HepG2 (cell line): ENCODE measurements at regions of chr1 and their contacts with region 1.

Region 1: GRCh38 chr1:204213668-204214662 is at the start of gene GOLT1A:
- DNase-seq: peak; percentile 90
- ATAC-seq: peak; percentile 90
- H3K4me3 ChIP-seq: peak within 1 kb of the TSS; percentile 57 to 84 (median 67)
- H3K27ac ChIP-seq: peak within 1 kb of the TSS; percentile 66
- H3K4me1 ChIP-seq: peaks cover 41% of the 10 kb centered on the region
- H3K27me3 ChIP-seq: no peaks in the 10 kb centered on the region; a peak in 1 of 5 replicates
- CTCF ChIP-seq: peak; percentile 93
- EP300 ChIP-seq: peak; percentile 10 to 48; a peak in 1 of 4 replicates
- POLR2A ChIP-seq: peak; percentile 35 to 83; a peak in 3 of 4 replicates
- RAD21 ChIP-seq: peak; percentile 81
- total RNA-seq, gene GOLT1A: 19.4 and 28.0 TPM in 2 replicates

Region 2: DNA sequence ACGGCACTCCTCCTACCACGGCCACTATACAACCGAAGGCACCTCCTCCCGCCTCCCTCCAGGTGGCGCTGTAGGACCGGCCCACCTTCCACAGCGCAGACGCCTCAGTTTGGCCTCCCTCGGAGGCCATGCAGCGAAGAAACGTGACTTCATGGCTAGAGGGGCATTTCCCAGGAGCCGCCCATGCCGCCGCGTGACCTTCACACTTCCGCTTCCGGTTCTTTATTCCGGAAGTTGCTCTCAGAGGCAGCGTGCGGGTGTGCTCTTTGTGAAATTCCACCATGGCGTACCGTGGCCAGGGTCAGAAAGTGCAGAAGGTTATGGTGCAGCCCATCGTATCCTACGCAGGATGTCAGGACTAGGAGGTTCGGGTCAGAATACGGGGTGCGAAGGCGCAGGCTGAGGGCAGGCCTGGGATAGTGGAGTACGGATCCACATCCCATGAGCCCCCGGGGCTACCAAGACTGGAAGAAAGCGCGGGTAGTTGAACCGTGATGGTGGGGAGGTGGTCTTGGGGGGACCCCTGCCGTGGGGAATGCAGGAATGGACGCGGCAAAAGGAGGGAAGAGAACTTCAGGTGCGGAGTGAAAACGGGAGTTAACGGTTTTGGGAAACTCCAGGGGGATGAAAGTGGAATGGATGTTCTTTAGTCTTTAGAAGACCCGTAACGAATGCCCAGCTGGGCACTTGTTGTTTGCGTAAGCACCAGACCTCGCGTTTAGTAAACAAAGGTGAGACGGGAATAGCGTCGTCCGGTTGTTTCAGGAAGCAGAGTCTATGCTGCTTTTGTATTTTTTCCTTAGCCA is 352.4 kb before region 1 on chr1 and contains the start of gene SNRPE:
- CTCF ChIA-PET with region 1: no interaction called
- POLR2A ChIA-PET with region 1: no interaction called
- in situ Hi-C with region 1: loop called (anchors 10 kb)
- intact Hi-C with region 1: loop called (anchors 5 kb)
- DNase-seq: peak; percentile 96
- ATAC-seq: peak; percentile 96
- H3K4me3 ChIP-seq: peak within 1 kb of the TSS; percentile 87 to 90 (median 90)
- H3K27ac ChIP-seq: peak within 1 kb of the TSS; percentile 85
- H3K4me1 ChIP-seq: peaks cover 27% of the 10 kb centered on the region
- H3K27me3 ChIP-seq: no peaks in the 10 kb centered on the region; a peak in 1 of 5 replicates
- CTCF ChIP-seq: peak; percentile 97
- EP300 ChIP-seq: peak in 1 of 2 experiments; percentile 48; a peak in 1 of 4 replicates
- POLR2A ChIP-seq: peak; percentile 71 to 92
- RAD21 ChIP-seq: peak; percentile 96
- total RNA-seq, gene SNRPE: 281 and 397 TPM in 2 replicates

Region 3: DNA sequence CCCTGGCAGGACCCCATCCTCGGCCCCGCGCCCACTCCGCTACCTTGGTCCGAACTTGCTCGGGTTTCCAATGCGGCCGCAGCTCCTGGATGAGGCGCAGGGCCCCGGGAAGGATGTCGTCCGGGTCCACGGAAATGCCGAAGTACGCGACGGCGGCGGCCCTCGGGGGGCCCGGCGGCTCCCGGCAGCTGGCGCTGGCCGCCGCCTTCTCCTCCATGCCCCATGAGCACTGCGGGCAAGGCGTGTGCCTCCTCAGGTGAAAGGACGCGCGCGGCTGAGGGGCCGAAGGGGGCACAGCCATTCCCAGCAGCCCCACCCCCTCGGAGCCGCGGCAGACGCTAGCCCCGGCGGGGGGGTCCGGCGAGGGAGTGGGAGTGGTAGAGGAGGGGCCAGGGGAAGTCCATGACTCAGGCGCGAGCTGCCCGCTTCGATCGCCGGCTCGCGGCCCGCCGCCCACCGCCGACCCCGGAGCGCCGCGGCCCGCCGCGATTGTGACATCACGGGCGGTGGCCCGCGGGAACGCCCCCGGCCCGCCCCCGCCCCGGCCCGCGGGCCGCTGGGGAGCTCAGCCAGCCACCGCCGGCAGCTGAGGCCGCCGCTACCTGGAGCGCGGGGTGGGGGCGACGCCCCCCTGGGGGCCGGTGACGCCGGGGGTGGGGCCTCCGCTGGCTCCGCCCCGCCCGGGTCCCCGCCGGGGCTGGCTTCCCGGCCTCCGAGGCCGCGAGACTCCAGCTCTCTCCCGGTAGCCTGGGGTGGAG is 62.2 kb before region 1 on chr1 and contains the start of gene ETNK2:
- CTCF ChIA-PET with region 1: no interaction called
- POLR2A ChIA-PET with region 1: interaction called, 5 read pairs
- in situ Hi-C with region 1: loop called (anchors 5 kb)
- intact Hi-C with region 1: no loop called
- DNase-seq: no peak
- ATAC-seq: peak; percentile 48
- H3K4me3 ChIP-seq: peak within 1 kb of the TSS; percentile 61 to 82 (median 72)
- H3K27ac ChIP-seq: peak within 1 kb of the TSS; percentile 38
- H3K4me1 ChIP-seq: peaks cover 46% of the 10 kb centered on the region
- H3K27me3 ChIP-seq: peaks cover 0 to 2% of the 10 kb centered on the region in 2 experiments; a peak in 3 of 5 replicates
- CTCF ChIP-seq: no peak; the same call in 1 of the 2 replicates
- EP300 ChIP-seq: no peak
- POLR2A ChIP-seq: peak in 1 of 2 experiments; percentile 65; a peak in 2 of 4 replicates
- RAD21 ChIP-seq: no peak
- total RNA-seq, gene ETNK2: 35.3 and 42.8 TPM in 2 replicates

Region 4: GRCh38 chr1:204169858-204170257 is 44.1 kb before region 1 on chr1:
- CTCF ChIA-PET with region 1: no interaction called
- POLR2A ChIA-PET with region 1: no interaction called
- in situ Hi-C with region 1: no loop called
- intact Hi-C with region 1: no loop called
- DNase-seq: no peak
- ATAC-seq: no peak
- H3K4me3 ChIP-seq: no peak overlapping the region
- H3K27ac ChIP-seq: no peak overlapping the region
- H3K4me1 ChIP-seq: peaks cover 24% of the 10 kb centered on the region
- H3K27me3 ChIP-seq: peaks cover 0 to 8% of the 10 kb centered on the region in 2 experiments; a peak in 1 of 5 replicates
- CTCF ChIP-seq: no peak
- EP300 ChIP-seq: no peak
- POLR2A ChIP-seq: no peak
- RAD21 ChIP-seq: no peak

Region 5: DNA sequence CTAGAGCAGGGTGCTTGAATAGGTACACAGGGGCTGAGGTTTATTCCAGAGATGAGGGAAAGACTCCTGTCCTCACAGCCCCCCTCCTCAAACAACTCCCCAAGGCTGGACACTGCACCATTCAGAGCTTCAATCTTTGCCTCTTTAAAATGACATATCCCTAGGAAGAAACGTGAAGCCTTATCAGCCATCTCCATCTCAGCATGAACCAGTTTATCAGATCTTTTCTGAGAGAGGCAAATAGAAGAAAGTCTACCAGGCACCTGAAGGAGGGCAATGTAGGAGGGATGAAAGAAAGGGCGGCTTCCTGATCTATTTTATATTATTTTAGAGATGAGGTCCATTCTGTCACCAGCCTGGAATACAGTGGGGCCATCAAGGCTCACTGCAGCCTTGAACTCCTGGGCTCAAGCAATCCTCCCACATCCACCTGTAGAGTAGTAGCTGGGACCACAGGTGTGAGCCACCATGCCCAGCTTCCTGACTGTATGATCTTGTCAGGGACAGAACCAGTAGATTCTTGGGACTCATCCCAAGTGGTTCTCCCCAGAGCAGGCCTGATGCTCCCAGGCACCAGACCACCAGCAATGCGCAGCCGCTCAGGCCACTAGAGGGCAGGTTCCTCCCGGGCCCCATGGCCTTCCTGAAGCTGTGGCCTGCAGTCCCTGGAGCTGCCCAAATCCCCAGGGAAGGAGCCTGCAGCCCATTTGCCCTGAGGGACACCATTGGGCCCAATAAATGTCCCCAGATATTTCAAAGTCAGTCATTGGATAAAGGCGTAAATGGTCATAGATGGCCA is 44.2 kb after region 1 on chr1:
- CTCF ChIA-PET with region 1: interaction called, 3 read pairs
- POLR2A ChIA-PET with region 1: interaction called, 9 read pairs
- in situ Hi-C with region 1: no loop called
- intact Hi-C with region 1: loop called (anchors 1 kb)
- DNase-seq: peak; percentile 42
- ATAC-seq: peak; percentile 67
- H3K4me3 ChIP-seq: no peak overlapping the region
- H3K27ac ChIP-seq: no peak overlapping the region
- H3K4me1 ChIP-seq: peaks cover 38% of the 10 kb centered on the region
- H3K27me3 ChIP-seq: no peaks in the 10 kb centered on the region
- CTCF ChIP-seq: peak; percentile 85
- EP300 ChIP-seq: no peak
- POLR2A ChIP-seq: no peak
- RAD21 ChIP-seq: peak; percentile 83

Region 6: DNA sequence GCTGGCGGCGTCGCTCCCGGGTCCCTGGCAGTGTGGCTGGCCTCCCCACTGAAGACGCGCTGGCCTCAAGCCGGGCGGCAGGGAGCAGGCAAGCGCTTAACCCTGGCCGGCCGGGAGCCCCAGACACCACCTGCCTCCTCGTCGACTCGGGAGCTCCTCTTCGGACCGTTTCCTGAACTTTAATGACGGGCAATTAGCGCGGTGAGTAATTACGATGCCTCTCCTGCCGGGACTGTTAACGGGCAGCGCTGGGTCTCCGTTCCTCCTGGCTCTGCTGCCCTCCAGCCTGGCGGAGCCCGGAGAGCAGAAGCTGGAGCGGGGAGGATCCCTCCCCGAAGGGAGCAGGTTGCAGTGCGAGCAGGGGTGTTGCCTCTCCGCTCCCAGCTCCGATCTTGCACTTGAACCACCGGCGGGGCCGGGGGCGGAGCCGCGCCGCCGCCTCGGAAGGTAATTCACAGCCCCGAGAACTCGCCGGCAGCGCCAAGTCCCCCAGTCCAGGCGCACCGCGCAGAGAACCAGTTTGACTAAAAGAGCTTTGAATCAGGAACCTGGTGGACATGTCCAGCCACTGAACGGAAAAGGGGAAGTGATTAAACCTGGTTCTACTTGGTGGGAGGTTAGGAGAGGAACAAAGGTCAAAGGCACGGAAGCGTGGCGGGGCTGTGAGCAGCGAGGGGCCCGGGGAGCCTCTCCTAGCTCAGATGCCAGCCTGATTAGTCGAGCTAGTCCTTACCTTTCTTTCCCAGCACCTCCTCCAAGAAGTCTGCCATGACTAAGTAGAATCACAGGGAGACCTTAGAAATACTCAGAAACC is 164.0 kb after region 1 on chr1:
- CTCF ChIA-PET with region 1: no interaction called
- POLR2A ChIA-PET with region 1: interaction called, 12 read pairs
- in situ Hi-C with region 1: no loop called
- intact Hi-C with region 1: no loop called
- DNase-seq: peak; percentile 69
- ATAC-seq: peak; percentile 82
- H3K4me3 ChIP-seq: peak overlapping the region; percentile 81 to 85 (median 83)
- H3K27ac ChIP-seq: peak overlapping the region; percentile 65
- H3K4me1 ChIP-seq: peaks cover 66% of the 10 kb centered on the region
- H3K27me3 ChIP-seq: no peaks in the 10 kb centered on the region; a peak in 1 of 5 replicates
- CTCF ChIP-seq: no peak
- EP300 ChIP-seq: no peak; a peak in 1 of 4 replicates
- POLR2A ChIP-seq: peak; percentile 39 to 70; a peak in 3 of 4 replicates
- RAD21 ChIP-seq: no peak

Region 7: GRCh38 chr1:204398217-204399081 is 184.5 kb after region 1 on chr1:
- CTCF ChIA-PET with region 1: interaction called, 8 read pairs
- POLR2A ChIA-PET with region 1: interaction called, 12 read pairs
- in situ Hi-C with region 1: no loop called
- intact Hi-C with region 1: loop called (anchors 1 kb)
- DNase-seq: peak; percentile 94
- ATAC-seq: peak; percentile 100
- H3K4me3 ChIP-seq: no peak overlapping the region
- H3K27ac ChIP-seq: peak overlapping the region; percentile 13
- H3K4me1 ChIP-seq: no peaks in the 10 kb centered on the region
- H3K27me3 ChIP-seq: no peaks in the 10 kb centered on the region
- CTCF ChIP-seq: peak; percentile 87
- EP300 ChIP-seq: 0 out of 4 replicates have a peak, but pooled peaks of 1 of the 2 experiments have one; percentile 7
- POLR2A ChIP-seq: no peak
- RAD21 ChIP-seq: peak; percentile 82